Psoas muscle (tissue), 8 donors: ENCODE measurements at regions of chr11 and their contacts with region 1.

Region 1: DNA sequence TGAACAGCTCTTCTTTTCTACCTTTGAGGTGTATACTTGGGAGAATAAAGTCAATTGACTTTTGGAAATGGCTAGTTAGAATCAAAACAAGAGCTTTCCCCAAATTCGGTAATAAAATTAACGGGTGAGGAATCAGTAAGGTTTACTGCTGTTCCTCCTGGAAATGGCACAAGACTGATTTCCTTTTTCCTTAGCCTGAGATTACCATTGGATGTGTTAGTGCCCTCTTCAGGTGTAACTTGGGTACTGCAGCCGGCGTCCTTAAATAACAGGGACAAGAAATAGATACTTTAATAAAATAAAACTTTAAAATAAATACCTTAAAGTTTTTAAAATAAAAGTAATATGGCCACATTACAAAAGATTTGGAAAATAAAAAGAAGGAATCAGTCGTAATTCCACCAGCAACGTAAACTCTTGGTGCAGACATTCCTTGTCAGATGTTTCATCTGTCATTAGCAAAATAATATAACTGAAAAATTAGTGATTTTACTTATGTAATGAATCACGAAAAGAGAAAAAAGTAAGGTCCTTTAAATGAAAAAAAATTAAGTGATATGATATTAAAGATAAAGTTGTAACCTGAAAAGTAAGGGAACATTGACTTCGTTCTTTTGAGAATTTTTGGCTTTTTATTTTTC is 29.7 kb downstream of the ZFTA start:
- DNase-seq: peak; percentile 56 to 71
- ATAC-seq: peak; percentile 54 to 80 (median 72)
- H3K4me3 ChIP-seq: no peak overlapping the region
- H3K27ac ChIP-seq: no peak overlapping the region
- H3K4me1 ChIP-seq: peaks cover 2% of the 10 kb centered on the region
- H3K27me3 ChIP-seq: no peaks in the 10 kb centered on the region
- CTCF ChIP-seq: peak; percentile 99

Region 2: DNA sequence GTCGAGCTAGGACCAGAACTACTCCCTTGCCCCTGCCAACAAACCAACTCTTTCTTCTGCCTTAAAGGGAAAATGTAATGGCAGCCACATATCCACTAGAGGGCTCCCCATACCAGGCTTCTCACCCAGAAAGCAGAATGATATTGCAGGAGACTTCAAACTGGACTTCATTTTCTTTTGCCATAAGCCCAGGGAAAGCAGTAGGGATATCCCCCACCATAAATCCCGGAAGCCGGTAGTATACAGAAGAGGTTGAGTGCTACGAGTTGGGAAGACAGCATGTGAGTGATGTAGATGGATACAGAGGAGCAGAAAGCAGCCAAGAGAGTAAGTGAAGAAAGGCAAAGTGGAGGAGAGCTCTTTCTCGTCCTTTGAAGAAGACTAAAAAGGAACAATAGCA is 259.9 kb before region 1 on chr11:
- intact Hi-C with region 1: loop called in 1 of 2 experiments (anchors 5 kb)
- DNase-seq: no peak
- ATAC-seq: peak; percentile 78 to 88 (median 80)
- H3K4me3 ChIP-seq: no peak overlapping the region
- H3K27ac ChIP-seq: no peak overlapping the region
- H3K4me1 ChIP-seq: no peaks in the 10 kb centered on the region
- H3K27me3 ChIP-seq: no peaks in the 10 kb centered on the region
- CTCF ChIP-seq: peak; percentile 91

Region 3: GRCh38 chr11:63518548-63518947 is 220.3 kb before region 1 on chr11:
- intact Hi-C with region 1: no loop called
- DNase-seq: no peak
- ATAC-seq: no peak
- H3K4me3 ChIP-seq: no peak overlapping the region
- H3K27ac ChIP-seq: no peak overlapping the region
- H3K4me1 ChIP-seq: no peaks in the 10 kb centered on the region
- H3K27me3 ChIP-seq: no peaks in the 10 kb centered on the region
- CTCF ChIP-seq: no peak

Region 4: GRCh38 chr11:63614136-63614664 is 124.6 kb before region 1 on chr11 and contains the start of gene PLAAT3:
- intact Hi-C with region 1: no loop called
- DNase-seq: peak; percentile 80 to 89
- ATAC-seq: peak; percentile 81 to 87 (median 84)
- H3K4me3 ChIP-seq: peak within 1 kb of the TSS; percentile 90
- H3K27ac ChIP-seq: peak within 1 kb of the TSS; percentile 97
- H3K4me1 ChIP-seq: peaks cover 33% of the 10 kb centered on the region
- H3K27me3 ChIP-seq: no peaks in the 10 kb centered on the region
- CTCF ChIP-seq: no peak
- total RNA-seq, gene PLAAT3: 67.6 to 102 (median 83.6) TPM

Region 5: GRCh38 chr11:63635762-63636465 is 102.9 kb before region 1 on chr11:
- intact Hi-C with region 1: loop called in 1 of 2 experiments (anchors 5 kb)
- DNase-seq: peak; percentile 30 to 58
- ATAC-seq: peak; percentile 66 to 86 (median 78)
- H3K4me3 ChIP-seq: no peak overlapping the region
- H3K27ac ChIP-seq: no peak overlapping the region
- H3K4me1 ChIP-seq: no peaks in the 10 kb centered on the region
- H3K27me3 ChIP-seq: no peaks in the 10 kb centered on the region
- CTCF ChIP-seq: peak; percentile 83

Region 6: GRCh38 chr11:63681321-63682049 is 57.4 kb before region 1 on chr11 and contains the start of gene RTN3:
- intact Hi-C with region 1: loop called (anchors 5 kb)
- DNase-seq: peak; percentile 96 to 98
- ATAC-seq: peak; percentile 93 to 97 (median 94)
- H3K4me3 ChIP-seq: peak within 1 kb of the TSS; percentile 96
- H3K27ac ChIP-seq: peak within 1 kb of the TSS; percentile 94
- H3K4me1 ChIP-seq: peaks cover 51% of the 10 kb centered on the region
- H3K27me3 ChIP-seq: no peaks in the 10 kb centered on the region
- CTCF ChIP-seq: peak; percentile 10
- total RNA-seq, gene RTN3: 40.5 to 110 (median 70.8) TPM

Region 7: GRCh38 chr11:63687845-63688244 is 51.0 kb before region 1 on chr11:
- intact Hi-C with region 1: loop called (anchors 5 kb)
- DNase-seq: no peak
- ATAC-seq: no peak
- H3K4me3 ChIP-seq: no peak overlapping the region
- H3K27ac ChIP-seq: no peak overlapping the region
- H3K4me1 ChIP-seq: peaks cover 71% of the 10 kb centered on the region
- H3K27me3 ChIP-seq: no peaks in the 10 kb centered on the region
- CTCF ChIP-seq: no peak